ENCODE measurements at regions of chr1 and their contacts with region 1.

Region 1: GRCh38 chr1:19651141-19651737 is 7.1 kb downstream of the NBL1 start:
- DNase-seq: peak; percentile 78
- ATAC-seq: peak; percentile 87

Region 2: DNA sequence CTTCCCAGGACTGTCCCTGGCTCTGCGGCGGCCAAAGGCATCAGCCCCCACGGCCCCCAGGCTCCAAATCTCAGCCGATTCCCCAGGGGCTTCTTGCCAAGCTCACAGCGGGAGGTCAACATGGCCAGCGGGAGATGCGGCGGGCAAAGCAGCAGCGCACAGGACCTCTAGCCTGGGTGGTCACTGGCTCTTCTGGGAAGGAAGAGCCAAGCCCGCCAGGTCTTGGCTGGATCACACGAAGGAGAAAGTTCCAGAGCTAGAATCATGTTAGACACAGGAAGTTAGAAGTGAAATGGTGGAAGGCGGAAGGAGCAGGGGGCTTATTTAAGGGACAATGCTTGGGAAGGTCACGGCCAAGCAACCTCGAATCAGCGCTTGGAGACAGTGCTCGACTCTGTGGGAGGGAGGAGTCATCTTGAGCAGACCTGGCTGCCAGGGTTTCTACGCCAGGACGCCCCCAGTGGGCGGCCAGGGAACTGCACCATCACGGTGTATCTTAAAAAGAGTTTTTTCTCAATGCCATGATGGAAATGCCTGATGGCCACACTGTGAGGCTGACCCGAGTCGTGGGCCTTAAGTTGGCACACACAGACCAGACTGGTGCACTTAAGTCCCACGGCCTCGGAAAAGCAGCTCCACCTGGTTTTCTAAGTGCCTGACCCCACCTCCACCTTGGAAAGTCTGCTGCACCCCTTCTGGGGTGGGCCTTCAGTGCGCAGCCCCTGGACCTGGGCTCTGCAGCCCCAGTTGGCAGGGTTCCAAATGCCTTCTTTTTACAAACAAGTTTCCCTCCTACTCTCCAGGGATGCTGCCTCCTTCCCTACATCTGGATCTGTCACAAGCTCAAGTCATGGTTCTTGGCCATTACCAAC is 309.8 kb before region 1 on chr1:
- intact Hi-C with region 1: loop called (anchors 5 kb)
- DNase-seq: peak; percentile 80
- ATAC-seq: peak; percentile 44

Region 3: GRCh38 chr1:19495799-19496624 is 155.2 kb before region 1 on chr1:
- intact Hi-C with region 1: loop called (anchors 10 kb)
- DNase-seq: no peak
- ATAC-seq: peak; percentile 29

Measured in left ventricle myocardium superior (tissue), 1 donor.